Transverse colon (tissue), 4 donors: ENCODE measurements at regions of chr7 and their contacts with region 1.

Region 1: GRCh38 chr7:106071356-106071998 is 40.6 kb downstream of the SYPL1 start:
- DNase-seq: peak; percentile 68
- H3K4me3 ChIP-seq: no peak overlapping the region
- H3K27ac ChIP-seq: peak overlapping the region; percentile 80 to 93 (median 87)
- H3K4me1 ChIP-seq: peaks cover 17 to 56% (median 39%) of the 10 kb centered on the region in 4 donors
- H3K27me3 ChIP-seq: no peaks in the 10 kb centered on the region
- CTCF ChIP-seq: no peak
- EP300 ChIP-seq: no peak
- POLR2A ChIP-seq: peak; percentile 65

Region 2: GRCh38 chr7:106041140-106041717 is 30.2 kb before region 1 on chr7:
- in situ Hi-C with region 1: no loop called
- intact Hi-C with region 1: no loop called
- DNase-seq: no peak
- H3K4me3 ChIP-seq: no peak overlapping the region
- H3K27ac ChIP-seq: no peak overlapping the region
- H3K4me1 ChIP-seq: peaks cover 0 to 12% (median 6%) of the 10 kb centered on the region in 4 donors
- H3K27me3 ChIP-seq: no peaks in the 10 kb centered on the region
- CTCF ChIP-seq: peak; percentile 59 to 74 (median 71)
- EP300 ChIP-seq: no peak
- POLR2A ChIP-seq: no peak

Region 3: DNA sequence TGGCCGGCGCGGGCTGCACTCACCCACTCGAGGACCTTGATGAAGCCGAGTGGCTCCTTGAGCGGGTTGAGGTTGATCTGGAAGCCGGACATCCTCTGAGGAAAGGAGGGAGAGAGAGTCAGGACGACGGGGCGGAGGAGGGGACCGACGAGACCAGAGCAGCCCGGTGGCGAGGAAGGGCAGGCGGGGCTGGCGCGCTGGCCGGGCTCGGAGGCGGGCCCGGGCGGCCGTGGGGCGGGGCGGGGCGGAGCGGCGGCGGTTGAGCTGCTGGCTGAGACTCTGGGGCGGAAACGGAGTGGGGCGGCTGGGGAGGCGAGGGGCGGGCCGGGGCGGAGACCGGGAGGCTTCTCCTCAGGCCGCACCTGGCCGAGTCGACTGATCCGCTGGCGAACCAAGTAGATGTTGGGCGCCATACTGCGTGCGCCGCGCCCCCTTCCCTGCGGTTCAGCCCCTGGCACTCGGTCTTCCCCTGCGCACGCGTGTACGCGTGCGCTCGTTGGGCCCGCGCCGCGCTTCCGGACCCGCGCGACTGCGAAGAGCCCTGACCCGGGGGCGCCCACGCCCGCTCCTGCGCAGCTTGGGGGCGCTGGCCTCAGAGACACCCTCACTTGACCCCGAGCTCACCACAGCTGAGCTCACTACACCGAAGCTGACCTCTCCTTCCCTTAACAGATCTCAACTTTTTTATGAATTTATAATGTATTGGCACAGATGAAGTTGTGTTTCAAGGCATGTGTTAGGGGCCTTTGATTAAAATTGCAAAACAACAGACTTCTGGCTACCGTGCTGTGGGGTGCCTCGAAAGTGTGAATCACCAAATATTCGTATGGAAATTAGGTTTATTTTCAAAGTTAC is 40.9 kb after region 1 on chr7 and contains the start of gene SYPL1:
- in situ Hi-C with region 1: no loop called
- intact Hi-C with region 1: loop called (anchors 5 kb)
- DNase-seq: peak; percentile 96
- H3K4me3 ChIP-seq: peak within 1 kb of the TSS; percentile 39 to 77 (median 70)
- H3K27ac ChIP-seq: peak within 1 kb of the TSS; percentile 98 to 99 (median 98)
- H3K4me1 ChIP-seq: peaks cover 7 to 34% (median 24%) of the 10 kb centered on the region in 4 donors
- H3K27me3 ChIP-seq: no peaks in the 10 kb centered on the region
- CTCF ChIP-seq: no peak
- EP300 ChIP-seq: no peak
- POLR2A ChIP-seq: peak; percentile 69
- total RNA-seq, gene SYPL1: 36.7 to 81.8 (median 59.5) TPM

Region 4: DNA sequence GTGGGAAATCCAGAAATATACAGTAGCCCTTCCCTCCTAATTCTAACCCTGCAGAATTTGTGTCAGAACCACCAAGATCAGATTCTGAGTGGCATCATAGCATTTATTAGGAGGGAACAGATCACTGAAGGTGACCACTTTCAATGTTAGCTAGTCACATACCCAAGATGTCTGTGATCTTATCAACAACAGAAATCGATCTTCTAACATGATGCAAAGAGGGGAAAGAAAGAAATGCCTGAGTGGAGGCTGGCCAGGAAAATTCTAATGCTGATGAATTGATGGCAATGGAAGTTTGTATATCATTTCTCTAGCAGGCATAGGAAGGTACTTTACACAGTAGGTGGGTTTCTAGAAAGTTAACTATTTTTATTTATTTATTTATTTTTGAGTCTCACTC is 51.2 kb after region 1 on chr7:
- in situ Hi-C with region 1: no loop called
- intact Hi-C with region 1: no loop called
- DNase-seq: no peak
- H3K4me3 ChIP-seq: no peak overlapping the region
- H3K27ac ChIP-seq: no peak overlapping the region
- H3K4me1 ChIP-seq: peaks cover 4 to 8% (median 7%) of the 10 kb centered on the region in 4 donors
- H3K27me3 ChIP-seq: no peaks in the 10 kb centered on the region
- CTCF ChIP-seq: no peak
- EP300 ChIP-seq: no peak
- POLR2A ChIP-seq: no peak